A549 (cell line): ENCODE measurements at regions of chr19 and their contacts with region 1.

Region 1: GRCh38 chr19:45405435-45406225 is 761 bp upstream of the PPP1R13L start:
- DNase-seq: peak; percentile 94 to 97
- ATAC-seq: peak; percentile 59 to 71
- H3K4me3 ChIP-seq: peak overlapping the region; percentile 66
- H3K27ac ChIP-seq: peak overlapping the region; percentile 94 to 96
- H3K4me1 ChIP-seq: peaks cover 39% of the 10 kb centered on the region
- CTCF ChIP-seq: no peak
- EP300 ChIP-seq: no peak
- POLR2A ChIP-seq: peak; percentile 12; the same call in 1 of the 2 replicates
- RAD21 ChIP-seq: no peak

Region 2: DNA sequence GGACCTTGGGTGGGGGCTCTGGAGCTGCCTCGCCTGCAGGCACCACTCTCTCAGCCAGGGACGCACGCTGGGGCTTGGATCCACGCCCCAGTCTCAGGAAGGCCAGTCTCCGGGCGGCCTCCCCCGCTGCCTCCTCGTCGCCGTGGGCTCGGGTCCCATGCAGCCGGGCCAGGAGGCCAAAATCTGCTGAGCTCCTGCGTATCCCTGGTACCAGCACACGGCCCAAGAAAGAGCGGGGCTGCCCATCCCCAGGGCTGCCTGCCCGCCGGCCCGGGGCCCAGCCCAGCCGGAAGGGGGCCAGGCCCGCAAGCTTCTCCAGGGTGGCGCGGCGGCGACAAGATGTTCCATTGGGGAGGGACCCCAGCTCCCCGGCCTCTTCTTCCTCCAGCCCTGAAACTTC is 167.1 kb before region 1 on chr19:
- CTCF ChIA-PET with region 1: interaction called, 11 read pairs
- POLR2A ChIA-PET with region 1: no interaction called
- DNase-seq: no peak
- ATAC-seq: no peak; a peak in 2 of 6 replicates
- H3K4me3 ChIP-seq: no peak overlapping the region
- H3K27ac ChIP-seq: no peak overlapping the region
- H3K4me1 ChIP-seq: no peaks in the 10 kb centered on the region
- CTCF ChIP-seq: no peak
- EP300 ChIP-seq: no peak
- POLR2A ChIP-seq: no peak
- RAD21 ChIP-seq: no peak

Region 3: GRCh38 chr19:45376045-45376724 is 29.4 kb before region 1 on chr19:
- CTCF ChIA-PET with region 1: interaction called, 26 read pairs
- POLR2A ChIA-PET with region 1: interaction called, 3 read pairs
- DNase-seq: peak; percentile 64 to 91
- ATAC-seq: peak; percentile 92 to 93
- H3K4me3 ChIP-seq: no peak overlapping the region
- H3K27ac ChIP-seq: peak overlapping the region; percentile 84 to 86
- H3K4me1 ChIP-seq: peaks cover 14% of the 10 kb centered on the region
- CTCF ChIP-seq: no peak
- EP300 ChIP-seq: no peak; a peak in 1 of 5 replicates
- POLR2A ChIP-seq: no peak
- RAD21 ChIP-seq: no peak

Region 4: DNA sequence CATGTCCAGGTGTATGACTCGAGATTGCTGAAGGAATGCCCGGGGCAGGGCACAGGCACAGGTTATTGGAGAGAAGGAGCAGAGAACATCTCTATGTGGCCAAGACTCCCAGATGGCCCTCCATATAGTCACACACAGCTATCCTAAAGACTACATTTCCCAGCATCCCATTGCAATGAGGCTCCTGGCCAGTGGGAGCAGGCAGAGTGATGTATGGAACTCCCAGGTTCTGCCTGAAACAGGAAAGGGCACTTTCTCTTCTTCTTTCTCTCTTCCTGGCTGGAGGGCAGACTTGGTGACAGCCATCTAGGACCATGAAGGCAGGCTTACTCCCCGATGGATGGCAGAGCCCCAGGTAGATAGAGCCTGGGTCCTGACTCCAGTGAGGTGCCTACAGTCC is 14.3 kb before region 1 on chr19:
- CTCF ChIA-PET with region 1: interaction called, 94 read pairs
- POLR2A ChIA-PET with region 1: no interaction called
- DNase-seq: peak in 1 of 2 experiments; percentile 62
- ATAC-seq: peak; percentile 94 to 96
- H3K4me3 ChIP-seq: no peak overlapping the region
- H3K27ac ChIP-seq: 0 out of 6 replicates have a peak overlapping the region, but pooled peaks of 1 of the 2 experiments have one; percentile 29
- H3K4me1 ChIP-seq: no peaks in the 10 kb centered on the region
- CTCF ChIP-seq: no peak
- EP300 ChIP-seq: no peak
- POLR2A ChIP-seq: no peak
- RAD21 ChIP-seq: no peak

Region 5: GRCh38 chr19:45439569-45440254 is 34.1 kb after region 1 on chr19:
- CTCF ChIA-PET with region 1: interaction called, 37 read pairs
- POLR2A ChIA-PET with region 1: no interaction called
- DNase-seq: peak; percentile 74 to 83
- ATAC-seq: peak; percentile 26 to 55
- H3K4me3 ChIP-seq: peak overlapping the region; percentile 52
- H3K27ac ChIP-seq: peak overlapping the region; percentile 80 to 95
- H3K4me1 ChIP-seq: peaks cover 27% of the 10 kb centered on the region
- CTCF ChIP-seq: peak; percentile 100
- EP300 ChIP-seq: no peak
- POLR2A ChIP-seq: peak; percentile 12; the same call in 1 of the 2 replicates
- RAD21 ChIP-seq: peak; percentile 77 to 99

Region 6: DNA sequence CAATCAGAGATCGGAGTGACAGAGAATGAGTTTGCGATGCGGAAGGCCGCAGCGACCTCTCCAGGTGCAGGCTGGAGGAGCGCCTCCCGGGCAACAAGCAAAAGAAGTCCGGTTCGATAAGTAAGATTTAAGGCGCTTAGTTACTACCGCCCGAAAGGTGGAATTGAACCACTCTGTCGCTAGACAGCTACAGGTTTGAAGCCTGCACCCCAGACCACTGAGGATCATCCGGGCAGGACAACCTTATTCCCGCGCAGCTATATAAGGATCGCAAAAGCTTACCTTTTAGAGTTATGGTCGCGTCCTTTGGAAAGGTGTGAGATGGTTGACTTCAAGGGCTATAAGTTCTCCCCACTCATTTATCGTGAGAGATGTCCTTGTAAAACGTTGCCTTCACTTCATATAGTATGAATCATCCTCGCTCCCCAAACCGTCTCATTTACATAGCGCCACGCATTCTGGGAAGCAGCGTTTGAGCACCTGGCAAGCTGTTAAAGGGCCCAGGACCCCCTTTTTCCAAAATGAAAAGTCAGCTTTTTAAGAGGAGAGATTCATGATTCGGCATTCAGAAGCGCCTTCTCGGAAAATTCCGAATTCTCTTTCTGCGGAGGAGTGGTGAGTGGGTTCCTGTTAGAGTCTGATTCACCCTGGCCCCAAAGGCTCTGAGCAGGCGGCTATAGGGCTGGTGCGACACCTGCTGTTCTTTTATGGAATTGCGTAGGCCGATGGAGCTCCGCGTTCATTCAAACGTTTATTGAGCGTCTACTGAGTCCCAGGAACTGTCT is 73.0 kb after region 1 on chr19:
- CTCF ChIA-PET with region 1: interaction called, 99 read pairs
- POLR2A ChIA-PET with region 1: interaction called, 7 read pairs
- DNase-seq: peak; percentile 89 to 99
- ATAC-seq: peak; percentile 69 to 80
- H3K4me3 ChIP-seq: peak overlapping the region; percentile 42
- H3K27ac ChIP-seq: peak overlapping the region; percentile 81 to 89
- H3K4me1 ChIP-seq: peaks cover 13% of the 10 kb centered on the region
- CTCF ChIP-seq: peak; percentile 99
- EP300 ChIP-seq: no peak
- POLR2A ChIP-seq: no peak
- RAD21 ChIP-seq: peak; percentile 98 to 99